Left ventricle myocardium inferior (tissue), 1 donor: ENCODE measurements at regions of chr15 and their contacts with region 1.

Region 1: GRCh38 chr15:45522328-45523160 is at the start of gene SLC30A4:
- DNase-seq: peak; percentile 71
- H3K4me3 ChIP-seq: peak within 1 kb of the TSS; percentile 80
- H3K27ac ChIP-seq: peak within 1 kb of the TSS; percentile 91
- H3K4me1 ChIP-seq: peaks cover 41% of the 10 kb centered on the region
- H3K27me3 ChIP-seq: no peaks in the 10 kb centered on the region
- CTCF ChIP-seq: peak; percentile 66
- total RNA-seq, gene SLC30A4: 2.8 TPM

Region 2: GRCh38 chr15:45587095-45587860 is 64.7 kb after region 1 on chr15 and contains the start of gene BLOC1S6:
- intact Hi-C with region 1: loop called (anchors 5 kb)
- DNase-seq: peak; percentile 90
- H3K4me3 ChIP-seq: peak within 1 kb of the TSS; percentile 80
- H3K27ac ChIP-seq: peak within 1 kb of the TSS; percentile 99
- H3K4me1 ChIP-seq: peaks cover 60% of the 10 kb centered on the region
- H3K27me3 ChIP-seq: no peaks in the 10 kb centered on the region
- CTCF ChIP-seq: no peak
- total RNA-seq, gene BLOC1S6: 24.3 TPM

Region 3: GRCh38 chr15:46080016-46080415 is 557.5 kb after region 1 on chr15:
- intact Hi-C with region 1: no loop called
- DNase-seq: no peak
- H3K4me3 ChIP-seq: no peak overlapping the region
- H3K27ac ChIP-seq: peak overlapping the region; percentile 47
- H3K4me1 ChIP-seq: peaks cover 12% of the 10 kb centered on the region
- H3K27me3 ChIP-seq: no peaks in the 10 kb centered on the region
- CTCF ChIP-seq: no peak